A673 (cell line): ENCODE measurements at regions of chr14 and their contacts with region 1.

Region 1: GRCh38 chr14:70622111-70622712 is 19.5 kb upstream of the TTC9 start:
- DNase-seq: peak; percentile 57
- H3K4me3 ChIP-seq: no peak overlapping the region
- H3K27ac ChIP-seq: no peak overlapping the region
- H3K4me1 ChIP-seq: no peaks in the 10 kb centered on the region
- H3K27me3 ChIP-seq: no peaks in the 10 kb centered on the region
- CTCF ChIP-seq: peak; percentile 77

Region 2: DNA sequence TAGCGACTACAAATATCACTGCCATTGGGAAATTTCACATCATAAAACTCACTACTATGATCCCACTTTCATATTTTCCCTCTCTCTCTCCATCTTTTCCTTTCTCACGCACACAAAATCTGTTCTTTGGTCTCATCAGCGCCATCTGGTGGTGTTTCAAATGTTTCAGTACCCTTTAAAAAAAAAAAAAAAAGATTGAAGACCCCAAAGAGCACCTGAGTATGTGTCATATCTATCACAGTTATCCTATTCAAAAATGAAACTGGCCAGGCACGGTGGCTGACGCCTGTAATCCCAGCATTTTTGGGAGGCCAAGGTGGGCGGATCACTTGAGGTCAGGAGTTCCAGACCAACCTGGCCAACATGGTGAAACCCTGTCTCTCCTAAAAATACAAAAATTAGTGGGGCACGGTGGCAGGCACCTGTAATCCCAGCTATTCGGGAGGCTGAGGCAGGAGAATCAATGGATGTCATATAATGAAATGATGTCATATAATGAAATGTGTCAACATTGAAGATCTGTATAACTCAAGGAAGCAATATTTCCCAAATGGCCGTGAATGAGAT is 91.9 kb after region 1 on chr14:
- CTCF ChIA-PET with region 1: no interaction called
- POLR2A ChIA-PET with region 1: no interaction called
- intact Hi-C with region 1: loop called (anchors 1 kb)
- DNase-seq: peak; percentile 82
- H3K4me3 ChIP-seq: no peak overlapping the region
- H3K27ac ChIP-seq: no peak overlapping the region
- H3K4me1 ChIP-seq: peaks cover 6% of the 10 kb centered on the region
- H3K27me3 ChIP-seq: no peaks in the 10 kb centered on the region
- CTCF ChIP-seq: peak; percentile 75

Region 3: DNA sequence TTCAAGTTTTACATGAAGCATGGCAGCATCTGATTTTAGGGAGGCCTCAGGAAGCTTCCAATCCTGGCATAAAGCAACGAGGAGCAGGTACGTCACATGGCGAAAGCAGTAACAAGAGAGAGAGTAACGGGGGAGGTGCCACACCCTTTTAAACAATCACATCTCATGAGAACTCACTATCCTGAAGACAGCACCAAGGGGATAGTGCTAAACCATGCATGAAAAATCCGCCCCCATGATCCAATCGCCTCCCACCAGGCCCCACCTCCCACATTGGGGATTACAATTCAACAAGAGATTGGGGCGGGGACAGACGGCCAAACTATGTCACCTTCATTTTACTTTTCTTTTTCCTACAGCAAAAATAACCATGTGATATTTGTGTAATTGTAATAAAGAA is 194.3 kb after region 1 on chr14:
- CTCF ChIA-PET with region 1: no interaction called
- POLR2A ChIA-PET with region 1: no interaction called
- intact Hi-C with region 1: loop called (anchors 5 kb)
- DNase-seq: peak; percentile 51
- H3K4me3 ChIP-seq: no peak overlapping the region
- H3K27ac ChIP-seq: no peak overlapping the region
- H3K4me1 ChIP-seq: peaks cover 15% of the 10 kb centered on the region
- H3K27me3 ChIP-seq: no peaks in the 10 kb centered on the region
- CTCF ChIP-seq: no peak

Region 4: GRCh38 chr14:70972107-70972976 is 350.1 kb after region 1 on chr14:
- CTCF ChIA-PET with region 1: no interaction called
- POLR2A ChIA-PET with region 1: no interaction called
- intact Hi-C with region 1: loop called (anchors 5 kb)
- DNase-seq: peak; percentile 91
- H3K4me3 ChIP-seq: no peak overlapping the region
- H3K27ac ChIP-seq: no peak overlapping the region
- H3K4me1 ChIP-seq: peaks cover 6% of the 10 kb centered on the region
- H3K27me3 ChIP-seq: no peaks in the 10 kb centered on the region
- CTCF ChIP-seq: peak; percentile 90

Region 5: DNA sequence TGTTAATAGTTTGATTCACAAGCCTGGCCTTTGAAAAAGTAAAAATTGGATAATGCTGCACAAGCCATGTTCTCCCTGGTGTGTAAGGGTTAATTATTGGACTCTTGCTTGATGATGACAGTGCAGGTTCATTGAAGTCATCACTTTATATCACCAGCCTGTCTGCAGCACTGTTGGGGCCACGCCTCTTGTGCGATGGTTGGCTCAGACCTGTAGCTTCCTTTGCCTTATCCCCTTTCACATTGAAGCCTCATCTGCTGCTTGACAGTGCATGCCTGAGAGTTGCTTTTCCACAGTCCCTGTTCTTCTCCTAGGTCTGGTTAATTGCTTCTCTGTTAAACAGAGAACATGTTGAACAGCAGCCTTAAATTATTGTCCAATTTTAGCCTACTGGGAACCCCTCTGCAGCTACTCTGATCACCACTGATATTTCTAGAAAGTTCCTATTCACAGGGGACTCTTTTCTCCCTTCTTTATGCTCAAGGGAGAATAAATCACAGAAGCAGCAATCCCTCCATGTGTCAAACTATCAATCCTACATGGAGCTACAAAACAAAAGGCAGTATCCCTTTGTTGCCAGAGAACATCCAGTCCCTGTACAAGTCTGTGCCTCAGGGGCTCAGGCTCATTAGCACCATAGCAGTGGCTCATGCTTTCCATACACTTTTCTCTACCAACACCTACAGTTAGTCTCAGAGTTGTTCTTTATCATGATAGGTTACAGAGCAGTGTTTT is 1632.2 kb after region 1 on chr14:
- CTCF ChIA-PET with region 1: no interaction called
- POLR2A ChIA-PET with region 1: no interaction called
- intact Hi-C with region 1: no loop called
- DNase-seq: no peak
- H3K4me3 ChIP-seq: no peak overlapping the region
- H3K27ac ChIP-seq: no peak overlapping the region
- H3K4me1 ChIP-seq: no peaks in the 10 kb centered on the region
- H3K27me3 ChIP-seq: no peaks in the 10 kb centered on the region
- CTCF ChIP-seq: no peak